CD4-positive, alpha-beta memory T cell (primary cell): ENCODE measurements at regions of chr12 and their contacts with region 1.

Region 1: DNA sequence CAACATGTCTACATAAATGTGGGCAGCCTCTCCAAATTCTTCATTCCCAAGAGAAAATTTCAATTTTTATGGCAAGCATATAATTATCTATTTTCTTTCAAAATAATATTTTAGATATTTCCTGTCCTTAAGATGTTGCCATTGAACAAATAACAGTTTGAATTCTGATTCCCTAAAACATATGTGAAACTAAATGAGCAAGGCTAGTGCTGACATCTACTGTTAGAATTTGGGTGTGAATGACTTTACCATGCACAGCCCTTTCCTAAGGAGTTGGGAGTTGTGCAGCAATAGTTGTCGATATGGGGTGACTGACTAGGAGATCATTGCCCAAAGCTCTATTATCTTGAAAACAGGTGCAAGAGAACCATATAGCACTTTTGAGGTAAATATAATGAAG is 108.2 kb upstream of the SLC38A4 start:
- DNase-seq: peak in 3 of 5 donors; percentile 2 to 7 (median 2)
- H3K4me3 ChIP-seq: no peak overlapping the region
- H3K4me3 Mint-ChIP-seq: no peak overlapping the region
- H3K27ac ChIP-seq: no peak overlapping the region
- H3K27ac Mint-ChIP-seq: no peak overlapping the region
- H3K4me1 ChIP-seq: no peaks in the 10 kb centered on the region
- H3K4me1 Mint-ChIP-seq: no peaks in the 10 kb centered on the region
- H3K27me3 ChIP-seq: peaks cover 3% of the 10 kb centered on the region
- H3K27me3 Mint-ChIP-seq: peaks cover 13 to 32% of the 10 kb centered on the region in 2 donors

Region 2: GRCh38 chr12:45816652-45817051 is 1117.3 kb before region 1 on chr12:
- CTCF ChIA-PET with region 1: no interaction called
- POLR2A ChIA-PET with region 1: no interaction called
- intact Hi-C with region 1: loop called (anchors 5 kb)
- DNase-seq: no peak
- H3K4me3 ChIP-seq: no peak overlapping the region
- H3K4me3 Mint-ChIP-seq: no peak overlapping the region
- H3K27ac ChIP-seq: no peak overlapping the region
- H3K27ac Mint-ChIP-seq: peak overlapping the region in 1 of 7 donors; percentile 19
- H3K4me1 ChIP-seq: no peaks in the 10 kb centered on the region
- H3K4me1 Mint-ChIP-seq: peaks cover 0 to 4% (median 1%) of the 10 kb centered on the region in 4 donors
- H3K27me3 ChIP-seq: no peaks in the 10 kb centered on the region
- H3K27me3 Mint-ChIP-seq: no peaks in the 10 kb centered on the region

Region 3: GRCh38 chr12:46983393-46984266 is 49.7 kb after region 1 on chr12:
- CTCF ChIA-PET with region 1: no interaction called
- POLR2A ChIA-PET with region 1: no interaction called
- intact Hi-C with region 1: no loop called
- DNase-seq: peak; percentile 21 to 37 (median 26)
- H3K4me3 ChIP-seq: no peak overlapping the region
- H3K4me3 Mint-ChIP-seq: peak overlapping the region in 1 of 8 donors; percentile 20
- H3K27ac ChIP-seq: no peak overlapping the region
- H3K27ac Mint-ChIP-seq: no peak overlapping the region
- H3K4me1 ChIP-seq: peaks cover 9% of the 10 kb centered on the region
- H3K4me1 Mint-ChIP-seq: peaks cover 0 to 7% (median 3%) of the 10 kb centered on the region in 4 donors
- H3K27me3 ChIP-seq: peaks cover 4% of the 10 kb centered on the region
- H3K27me3 Mint-ChIP-seq: peaks cover 26 to 34% of the 10 kb centered on the region in 2 donors